ENCODE measurements at regions of chr1 and their contacts with region 1.

Region 1: GRCh38 chr1:226702957-226703831 is 35.9 kb downstream of the ITPKB start:
- DNase-seq: peak; percentile 79
- ATAC-seq: peak; percentile 94
- H3K4me3 Mint-ChIP-seq: peak overlapping the region; percentile 75
- H3K27ac Mint-ChIP-seq: peak overlapping the region; percentile 83
- H3K4me1 Mint-ChIP-seq: peaks cover 54% of the 10 kb centered on the region
- H3K27me3 Mint-ChIP-seq: no peaks in the 10 kb centered on the region

Region 2: GRCh38 chr1:226671290-226671689 is 31.9 kb before region 1 on chr1:
- CTCF ChIA-PET with region 1: no interaction called
- DNase-seq: no peak
- ATAC-seq: no peak
- H3K4me3 Mint-ChIP-seq: no peak overlapping the region
- H3K27ac Mint-ChIP-seq: no peak overlapping the region
- H3K4me1 Mint-ChIP-seq: peaks cover 52% of the 10 kb centered on the region
- H3K27me3 Mint-ChIP-seq: no peaks in the 10 kb centered on the region

Region 3: DNA sequence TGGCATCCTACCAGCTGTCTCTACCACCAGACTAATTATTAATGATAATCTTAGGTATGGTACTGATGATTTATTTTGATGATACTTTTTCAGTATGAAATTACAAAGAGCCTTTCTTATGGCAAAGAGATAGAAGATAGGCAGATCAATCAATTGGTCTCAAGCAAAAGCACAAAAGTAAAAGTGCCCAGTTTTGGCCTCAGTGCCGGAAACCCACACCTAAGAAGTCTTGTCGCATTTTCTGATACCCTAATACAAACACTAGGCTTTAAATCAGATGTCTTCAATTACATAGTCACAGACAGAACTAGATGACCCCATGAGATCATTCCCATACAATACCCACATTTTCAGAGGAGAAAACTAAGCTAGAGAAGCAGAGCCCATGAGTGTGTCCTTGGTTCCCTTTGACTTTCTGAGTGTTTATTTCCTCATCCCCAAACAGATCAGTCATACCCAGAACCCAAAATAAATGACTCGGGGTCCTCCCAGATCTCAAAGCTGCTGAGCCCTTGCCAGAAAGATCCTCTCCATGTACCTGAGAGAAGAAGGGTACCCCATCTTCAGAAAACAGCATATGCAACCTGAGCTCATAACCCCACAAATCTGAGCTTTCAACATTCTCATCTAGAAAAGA is 28.2 kb after region 1 on chr1:
- CTCF ChIA-PET with region 1: interaction called, 11 read pairs
- DNase-seq: no peak
- ATAC-seq: peak; percentile 11
- H3K4me3 Mint-ChIP-seq: peak overlapping the region; percentile 88
- H3K27ac Mint-ChIP-seq: peak overlapping the region; percentile 66
- H3K4me1 Mint-ChIP-seq: peaks cover 91% of the 10 kb centered on the region
- H3K27me3 Mint-ChIP-seq: no peaks in the 10 kb centered on the region

Measured in activated CD8-positive, alpha-beta memory T cell treated with anti-CD3 and anti-CD28 coated beads, Interleukin-2, amount 10 ng/mL, durations not matched to agents 7 days and 5 days (primary cell).